A549 (cell line): ENCODE measurements at regions of chr10 and their contacts with region 1.

Region 1: GRCh38 chr10:110354322-110354766 is 49.6 kb upstream of the SMNDC1 start:
- DNase-seq: peak; percentile 69 to 88
- ATAC-seq: peak; percentile 70 to 93
- H3K4me3 ChIP-seq: no peak overlapping the region
- H3K27ac ChIP-seq: peak overlapping the region; percentile 79 to 83
- H3K4me1 ChIP-seq: peaks cover 58% of the 10 kb centered on the region
- CTCF ChIP-seq: peak; percentile 76
- EP300 ChIP-seq: no peak
- POLR2A ChIP-seq: no peak
- RAD21 ChIP-seq: peak; percentile 75 to 89

Region 2: DNA sequence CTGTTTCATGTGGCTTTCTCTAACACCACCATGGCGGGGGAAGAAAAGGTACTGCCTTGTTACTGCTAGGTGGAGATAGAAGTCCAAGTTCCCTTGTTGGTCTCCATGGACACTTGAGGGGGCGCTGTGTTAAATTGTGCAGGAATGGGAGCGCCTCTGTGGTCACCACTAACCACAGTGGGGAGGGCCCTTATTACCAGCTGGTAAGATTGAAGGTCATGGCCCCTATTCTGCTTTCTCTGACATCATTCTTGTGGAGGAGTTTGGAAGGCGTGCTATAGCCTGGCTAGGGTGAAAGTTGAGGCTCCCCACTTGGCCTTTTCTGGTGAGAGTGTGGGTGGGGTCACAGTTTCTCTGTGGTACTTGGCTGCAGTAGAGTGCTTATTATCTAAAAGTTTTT is 161.8 kb before region 1 on chr10:
- CTCF ChIA-PET with region 1: no interaction called
- POLR2A ChIA-PET with region 1: no interaction called
- DNase-seq: no peak
- ATAC-seq: no peak; a peak in 1 of 6 replicates
- H3K4me3 ChIP-seq: no peak overlapping the region
- H3K27ac ChIP-seq: no peak overlapping the region
- H3K4me1 ChIP-seq: 0 out of 3 replicates have a peak, but pooled peaks cover 6% of the 10 kb centered on the region
- CTCF ChIP-seq: no peak
- EP300 ChIP-seq: no peak
- POLR2A ChIP-seq: no peak
- RAD21 ChIP-seq: no peak

Region 3: DNA sequence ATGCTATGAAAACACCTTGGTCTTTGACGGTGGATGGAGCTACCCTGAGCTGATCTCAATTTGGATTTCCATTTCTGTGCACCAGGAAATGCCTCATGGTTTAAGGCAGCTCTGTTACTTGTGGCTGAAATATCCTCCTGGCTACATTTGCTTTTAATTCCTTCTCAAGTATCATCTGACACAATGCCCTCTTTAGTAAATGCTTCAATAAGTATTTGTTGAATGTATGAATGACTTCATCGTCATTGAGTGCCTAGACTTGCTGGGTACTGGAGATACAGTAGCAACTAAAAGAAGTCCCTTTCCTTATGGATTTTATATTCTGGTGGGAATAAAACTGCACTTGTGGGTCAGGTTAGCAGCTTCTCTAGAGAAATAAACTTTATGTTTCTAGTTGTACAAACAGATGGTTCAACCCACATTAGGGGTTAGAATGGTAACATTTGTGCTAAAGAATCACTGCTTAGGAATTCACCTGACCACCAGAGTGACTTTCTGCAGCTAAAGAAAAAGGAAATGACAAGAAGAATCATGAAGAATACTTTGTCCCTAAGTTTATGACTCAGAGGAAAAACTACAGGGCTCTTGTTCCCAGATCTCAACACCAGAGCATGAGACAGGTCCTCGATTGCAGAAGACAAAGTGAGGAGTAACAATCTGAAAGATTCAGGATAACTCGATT is 27.9 kb before region 1 on chr10:
- CTCF ChIA-PET with region 1: interaction called, 27 read pairs
- POLR2A ChIA-PET with region 1: no interaction called
- DNase-seq: no peak
- ATAC-seq: no peak
- H3K4me3 ChIP-seq: no peak overlapping the region
- H3K27ac ChIP-seq: peak overlapping the region; percentile 66 to 68; a peak in 4 of 6 replicates
- H3K4me1 ChIP-seq: peaks cover 35% of the 10 kb centered on the region
- CTCF ChIP-seq: no peak
- EP300 ChIP-seq: no peak
- POLR2A ChIP-seq: no peak
- RAD21 ChIP-seq: no peak

Region 4: DNA sequence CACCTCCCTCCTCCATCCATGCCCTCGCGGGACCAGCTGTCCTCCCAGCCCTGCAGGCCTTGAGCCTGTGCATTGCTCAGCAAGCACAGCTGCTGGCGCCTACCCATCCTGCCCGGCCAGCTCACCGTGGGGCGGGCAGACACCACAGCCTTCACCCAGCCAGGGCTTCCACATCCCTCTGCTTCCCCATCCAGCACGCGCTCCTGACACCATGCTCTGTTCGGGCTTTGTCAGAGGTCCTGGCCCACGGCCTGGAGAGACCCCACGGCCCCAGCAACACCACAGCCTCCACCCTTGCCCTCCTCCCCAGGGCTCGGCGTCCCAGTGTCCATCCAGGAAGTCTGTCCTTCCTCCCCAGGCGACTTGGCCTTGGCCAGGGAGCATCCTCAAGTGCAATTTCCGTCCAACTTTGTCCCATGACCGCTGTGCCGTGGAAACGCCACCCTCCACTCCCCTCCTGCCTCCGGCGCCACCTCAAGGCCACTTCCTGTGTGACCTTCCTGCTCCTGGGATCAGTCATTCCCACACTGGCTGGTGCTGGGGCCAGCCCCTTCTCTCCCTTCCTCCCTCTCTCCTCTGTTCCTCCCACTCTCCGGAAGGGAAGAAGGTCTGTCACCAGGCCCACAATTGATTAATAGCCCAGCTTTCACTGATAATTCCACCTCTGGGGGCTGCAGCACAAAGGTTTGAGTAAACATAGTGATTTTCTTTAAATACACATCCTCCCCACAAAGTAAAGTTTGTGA is 21.9 kb after region 1 on chr10:
- CTCF ChIA-PET with region 1: interaction called, 16 read pairs
- POLR2A ChIA-PET with region 1: no interaction called
- DNase-seq: no peak
- ATAC-seq: peak in 1 of 2 experiments; percentile 24; a peak in 2 of 6 replicates
- H3K4me3 ChIP-seq: no peak overlapping the region
- H3K27ac ChIP-seq: peak overlapping the region; percentile 25 to 82; a peak in 4 of 6 replicates
- H3K4me1 ChIP-seq: peaks cover 21% of the 10 kb centered on the region
- CTCF ChIP-seq: no peak
- EP300 ChIP-seq: no peak
- POLR2A ChIP-seq: no peak
- RAD21 ChIP-seq: no peak

Region 5: GRCh38 chr10:110410329-110411046 is 56.1 kb after region 1 on chr10:
- CTCF ChIA-PET with region 1: interaction called, 27 read pairs
- POLR2A ChIA-PET with region 1: interaction called, 3 read pairs
- DNase-seq: peak; percentile 96 to 98
- ATAC-seq: peak; percentile 75 to 87
- H3K4me3 ChIP-seq: no peak overlapping the region
- H3K27ac ChIP-seq: peak overlapping the region; percentile 99
- H3K4me1 ChIP-seq: peaks cover 85% of the 10 kb centered on the region
- CTCF ChIP-seq: no peak
- EP300 ChIP-seq: peak; percentile 90 to 94; a peak in 4 of 5 replicates
- POLR2A ChIP-seq: no peak
- RAD21 ChIP-seq: peak; percentile 33 to 62; a peak in 4 of 5 replicates

Region 6: GRCh38 chr10:110425684-110426293 is 71.4 kb after region 1 on chr10:
- CTCF ChIA-PET with region 1: interaction called, 20 read pairs
- POLR2A ChIA-PET with region 1: interaction called, 3 read pairs
- DNase-seq: peak; percentile 76 to 97
- ATAC-seq: peak; percentile 69 to 70
- H3K4me3 ChIP-seq: no peak overlapping the region
- H3K27ac ChIP-seq: peak overlapping the region; percentile 96 to 99
- H3K4me1 ChIP-seq: peaks cover 96% of the 10 kb centered on the region
- CTCF ChIP-seq: no peak
- EP300 ChIP-seq: peak in 1 of 2 experiments; percentile 30; a peak in 1 of 5 replicates
- POLR2A ChIP-seq: no peak
- RAD21 ChIP-seq: no peak; a peak in 1 of 5 replicates

Region 7: DNA sequence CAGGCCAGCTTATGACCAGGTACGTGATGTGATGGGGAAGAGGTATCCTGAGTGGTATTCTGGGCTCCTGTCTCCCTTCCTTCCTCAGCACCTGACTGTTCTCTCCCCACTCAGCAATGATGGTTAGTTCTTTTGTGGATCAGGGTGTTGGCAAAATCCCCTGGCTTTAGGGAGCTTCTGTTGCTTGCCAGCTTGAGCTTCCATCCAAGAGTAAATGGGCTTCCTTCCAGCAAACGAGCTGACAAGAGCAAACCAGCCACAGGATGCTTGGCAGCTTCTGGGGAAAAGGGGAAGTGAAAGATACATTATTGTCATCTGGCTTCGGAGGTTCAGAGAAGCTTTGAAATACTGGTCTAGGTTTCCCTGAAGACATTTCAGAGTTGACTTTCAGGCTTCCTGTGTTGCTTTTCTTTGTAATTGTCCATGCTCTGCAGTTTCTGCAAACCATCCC is 148.5 kb after region 1 on chr10:
- CTCF ChIA-PET with region 1: interaction called, 38 read pairs
- POLR2A ChIA-PET with region 1: interaction called, 10 read pairs
- DNase-seq: peak in 1 of 2 experiments; percentile 40
- ATAC-seq: no peak
- H3K4me3 ChIP-seq: peak overlapping the region; percentile 86
- H3K27ac ChIP-seq: peak overlapping the region; percentile 96
- H3K4me1 ChIP-seq: peaks cover 68% of the 10 kb centered on the region
- CTCF ChIP-seq: no peak
- EP300 ChIP-seq: no peak
- POLR2A ChIP-seq: no peak
- RAD21 ChIP-seq: no peak

Region 8: DNA sequence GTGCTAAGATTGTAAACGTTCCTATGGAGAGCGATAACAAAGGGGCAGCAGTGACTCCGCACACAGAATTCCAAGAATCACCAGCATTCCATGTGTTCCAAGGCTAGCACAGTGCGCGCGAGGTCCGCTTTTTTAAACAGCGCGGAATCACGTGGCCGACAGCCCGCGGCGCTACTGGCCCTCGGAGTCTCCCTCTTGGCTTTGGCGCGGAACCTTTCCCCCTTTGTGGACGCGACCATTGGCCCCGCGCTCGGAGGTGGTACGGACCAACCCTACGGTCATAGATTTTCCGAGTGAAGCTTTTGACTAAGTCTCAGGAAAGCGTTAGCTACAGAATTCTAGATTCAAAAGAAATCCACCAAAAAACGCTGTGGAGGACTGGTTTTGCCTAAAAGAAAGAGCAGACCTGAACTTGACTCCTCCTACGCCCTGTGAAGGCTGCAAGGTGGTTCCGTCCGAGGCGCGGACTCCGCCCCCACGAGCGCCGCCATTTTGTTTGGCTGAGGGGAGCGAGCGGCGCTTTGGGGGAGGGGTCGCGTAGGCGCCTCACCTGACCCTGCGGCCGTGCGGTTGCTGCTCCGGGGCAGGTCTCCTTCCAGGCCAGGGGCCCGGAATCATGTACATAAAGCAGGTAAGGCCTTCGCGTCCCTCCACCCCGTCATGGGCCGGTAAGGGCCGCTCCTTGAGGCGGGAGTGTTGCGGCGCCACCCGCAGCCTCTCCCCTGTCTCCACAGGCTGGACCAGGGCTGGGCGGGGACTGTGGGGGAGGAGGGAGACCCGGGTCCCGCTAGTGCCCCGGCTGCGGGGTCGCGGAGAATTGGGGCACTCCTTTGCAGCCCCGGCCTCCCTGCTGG is 213.1 kb after region 1 on chr10 and contains the start of gene SMC3:
- CTCF ChIA-PET with region 1: no interaction called
- POLR2A ChIA-PET with region 1: no interaction called
- DNase-seq: peak; percentile 80 to 97
- ATAC-seq: peak; percentile 92 to 94
- H3K4me3 ChIP-seq: peak within 1 kb of the TSS; percentile 88
- H3K27ac ChIP-seq: peak within 1 kb of the TSS; percentile 84 to 99
- H3K4me1 ChIP-seq: peaks cover 36% of the 10 kb centered on the region
- CTCF ChIP-seq: no peak
- EP300 ChIP-seq: no peak
- POLR2A ChIP-seq: peak; percentile 88
- RAD21 ChIP-seq: no peak
- polyA plus RNA-seq, gene SMC3: 39.2 and 59.5 TPM in 2 replicates